ENCODE measurements at regions of chr13 and their contacts with region 1.

Region 1: DNA sequence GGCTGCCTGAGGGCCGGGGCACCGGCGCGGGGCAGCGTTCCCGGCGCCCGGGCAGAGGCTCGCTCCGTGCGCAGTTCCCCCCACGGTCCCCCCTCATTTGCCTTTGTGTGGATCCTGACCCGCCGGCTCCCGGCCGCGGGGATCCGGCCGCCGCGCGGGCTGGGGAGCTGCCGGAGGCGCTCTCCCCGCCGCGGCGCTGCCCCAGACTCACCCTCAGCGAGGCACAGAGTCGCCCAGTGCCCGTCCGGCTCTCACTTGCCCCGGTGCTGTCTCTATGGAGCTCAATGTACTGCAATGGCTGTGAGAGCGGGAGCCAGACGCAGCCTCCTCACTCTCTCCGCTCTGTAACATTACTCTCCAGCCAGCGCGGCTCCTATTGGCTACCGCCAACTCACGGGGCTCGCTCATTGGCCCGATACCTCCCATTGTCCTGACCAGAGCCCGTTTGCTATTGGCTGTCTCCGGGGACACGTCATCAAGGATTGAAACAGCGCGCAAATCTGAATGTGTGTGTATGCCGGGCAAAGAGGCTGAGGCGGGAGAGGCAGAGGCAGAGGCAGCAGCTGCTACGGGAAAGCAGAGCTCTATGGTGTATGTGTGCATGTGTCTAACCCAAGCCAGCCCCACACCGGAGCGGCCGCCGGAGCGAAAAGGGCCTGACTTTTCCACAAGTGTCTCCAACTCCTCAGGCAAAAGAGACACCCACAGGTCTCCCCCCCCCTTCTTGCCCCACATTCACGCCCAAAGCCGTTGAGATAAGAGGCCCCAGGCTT is at the start of gene HMGB1:
- DNase-seq: peak; percentile 94 to 97
- H3K4me3 ChIP-seq: peak within 1 kb of the TSS; percentile 72
- H3K27ac ChIP-seq: peak within 1 kb of the TSS; percentile 86
- H3K4me1 ChIP-seq: peaks cover 31% of the 10 kb centered on the region
- H3K27me3 ChIP-seq: no peaks in the 10 kb centered on the region
- CTCF ChIP-seq: no peak
- total RNA-seq, gene HMGB1: 172 and 313 TPM in 2 replicates

Region 2: GRCh38 chr13:30132623-30133553 is 332.9 kb before region 1 on chr13:
- CTCF ChIA-PET with region 1: no interaction called
- POLR2A ChIA-PET with region 1: no interaction called
- intact Hi-C with region 1: loop called (anchors 1 kb)
- DNase-seq: peak; percentile 75 to 90
- H3K4me3 ChIP-seq: no peak overlapping the region
- H3K27ac ChIP-seq: no peak overlapping the region
- H3K4me1 ChIP-seq: peaks cover 7% of the 10 kb centered on the region
- H3K27me3 ChIP-seq: no peaks in the 10 kb centered on the region
- CTCF ChIP-seq: peak; percentile 90

Region 3: GRCh38 chr13:30341815-30342570 is 123.8 kb before region 1 on chr13:
- CTCF ChIA-PET with region 1: no interaction called
- POLR2A ChIA-PET with region 1: no interaction called
- intact Hi-C with region 1: no loop called
- DNase-seq: peak; percentile 70 to 86
- H3K4me3 ChIP-seq: peak overlapping the region; percentile 1; the same call in 1 of the 2 replicates
- H3K27ac ChIP-seq: no peak overlapping the region
- H3K4me1 ChIP-seq: peaks cover 60% of the 10 kb centered on the region
- H3K27me3 ChIP-seq: no peaks in the 10 kb centered on the region
- CTCF ChIP-seq: no peak

Region 4: GRCh38 chr13:30395192-30396084 is 70.3 kb before region 1 on chr13:
- CTCF ChIA-PET with region 1: no interaction called
- POLR2A ChIA-PET with region 1: no interaction called
- intact Hi-C with region 1: no loop called
- DNase-seq: peak; percentile 71 to 89
- H3K4me3 ChIP-seq: peak overlapping the region; percentile 61
- H3K27ac ChIP-seq: peak overlapping the region; percentile 55
- H3K4me1 ChIP-seq: 0 out of 2 replicates have a peak, but pooled peaks cover 11% of the 10 kb centered on the region
- H3K27me3 ChIP-seq: no peaks in the 10 kb centered on the region
- CTCF ChIP-seq: no peak

Region 5: DNA sequence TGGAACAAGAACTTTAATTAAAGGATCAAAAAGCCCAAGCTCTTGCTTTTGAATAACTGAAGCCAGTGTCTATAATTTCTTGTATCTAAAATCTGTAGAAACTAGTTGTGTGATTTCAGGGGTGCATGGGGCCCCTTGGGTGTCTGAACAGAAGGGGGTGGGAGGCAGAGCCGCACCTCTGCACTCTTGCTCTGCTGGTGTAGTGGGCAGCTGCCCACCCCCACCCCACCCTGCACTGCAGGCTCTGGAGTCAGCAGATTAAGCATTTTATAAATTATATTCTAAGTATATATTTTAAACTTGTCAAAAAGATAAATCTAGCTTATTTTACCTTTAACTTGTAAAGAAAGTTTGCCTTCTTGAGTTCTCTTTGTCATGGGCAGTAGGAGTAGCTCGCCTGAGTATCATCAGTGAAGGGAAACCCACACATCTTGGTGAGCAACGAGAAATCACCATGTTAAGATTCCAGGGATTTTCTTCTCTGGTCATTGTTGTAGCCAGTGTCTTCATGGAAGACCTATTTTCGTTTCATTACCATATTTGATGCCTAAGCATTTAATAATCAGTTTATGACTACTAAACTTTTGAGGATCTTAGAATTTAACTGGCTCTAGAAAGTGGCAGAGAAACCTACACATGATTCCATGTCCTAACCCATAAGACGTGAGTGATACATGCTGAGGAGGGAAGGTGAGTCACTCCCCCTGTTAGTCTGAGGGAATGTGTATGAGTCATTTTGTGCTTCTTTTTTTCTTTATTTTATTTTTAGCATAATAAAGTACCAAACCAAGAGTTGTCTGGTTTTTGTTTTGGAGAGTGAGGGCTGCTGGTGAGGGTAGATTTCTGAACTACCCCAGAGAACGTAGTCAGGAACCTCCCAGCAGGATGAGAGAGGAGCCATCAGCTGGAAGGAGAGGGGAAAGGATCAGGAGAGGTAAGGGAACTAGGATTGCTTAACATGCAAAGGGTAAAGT is 35.8 kb before region 1 on chr13:
- CTCF ChIA-PET with region 1: no interaction called
- POLR2A ChIA-PET with region 1: interaction called, 16 read pairs
- intact Hi-C with region 1: no loop called
- DNase-seq: peak in 1 of 2 experiments; percentile 85
- H3K4me3 ChIP-seq: no peak overlapping the region; the same call in 1 of the 2 replicates
- H3K27ac ChIP-seq: peak overlapping the region; percentile 69
- H3K4me1 ChIP-seq: peaks cover 39% of the 10 kb centered on the region
- H3K27me3 ChIP-seq: no peaks in the 10 kb centered on the region
- CTCF ChIP-seq: no peak

Region 6: DNA sequence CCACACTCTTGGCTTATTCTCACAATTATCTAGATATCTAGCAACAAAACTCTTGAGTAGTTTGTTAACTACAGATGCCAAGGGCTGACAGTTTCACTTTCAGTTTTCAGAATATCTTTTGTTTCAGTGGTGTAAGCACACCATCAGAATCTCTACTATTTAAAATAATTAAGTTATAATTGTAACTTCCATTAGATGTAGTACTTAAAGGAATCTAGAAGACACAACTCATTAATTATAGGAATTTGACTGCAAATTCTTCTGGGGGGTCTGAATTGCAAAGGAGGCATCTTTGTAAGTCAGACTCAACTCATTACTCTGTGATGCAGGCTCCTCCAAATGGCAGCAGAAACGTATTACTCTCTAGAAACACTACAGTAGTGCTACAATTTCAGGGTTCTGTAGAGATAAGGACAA is 107.1 kb after region 1 on chr13:
- CTCF ChIA-PET with region 1: no interaction called
- POLR2A ChIA-PET with region 1: no interaction called
- intact Hi-C with region 1: loop called (anchors 2 kb)
- DNase-seq: no peak
- H3K4me3 ChIP-seq: no peak overlapping the region; the same call in 1 of the 2 replicates
- H3K27ac ChIP-seq: no peak overlapping the region
- H3K4me1 ChIP-seq: peaks cover 34% of the 10 kb centered on the region
- H3K27me3 ChIP-seq: no peaks in the 10 kb centered on the region
- CTCF ChIP-seq: no peak

Region 7: DNA sequence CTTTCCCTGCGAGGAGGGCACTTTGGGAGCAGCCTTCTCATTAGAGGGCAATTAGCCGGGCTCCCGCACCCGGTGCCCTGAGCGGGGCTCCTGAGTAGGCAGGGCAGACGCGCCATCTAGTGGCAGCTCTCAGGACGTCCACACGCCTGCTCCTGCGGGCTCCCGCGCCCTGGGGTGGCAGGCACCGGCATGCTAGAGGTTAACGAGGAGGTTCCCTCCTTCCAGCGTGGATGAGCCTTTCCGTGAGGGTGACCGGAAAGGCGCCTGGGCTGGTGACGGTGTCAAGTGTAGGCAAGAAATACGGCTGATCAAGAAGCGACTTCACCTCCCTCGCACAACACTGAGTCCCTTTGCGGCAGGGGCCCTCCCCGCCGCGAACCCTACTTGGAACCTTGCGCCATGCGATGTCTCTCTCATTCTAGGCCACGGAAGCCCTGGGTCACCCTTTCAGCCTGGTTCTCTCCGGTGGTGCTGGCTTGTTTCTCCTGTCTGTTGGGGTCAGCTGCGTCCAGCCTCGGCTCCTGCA is 337.2 kb after region 1 on chr13:
- CTCF ChIA-PET with region 1: no interaction called
- POLR2A ChIA-PET with region 1: no interaction called
- intact Hi-C with region 1: loop called (anchors 10 kb)
- DNase-seq: peak in 1 of 2 experiments; percentile 57
- H3K4me3 ChIP-seq: no peak overlapping the region
- H3K27ac ChIP-seq: no peak overlapping the region
- H3K4me1 ChIP-seq: no peaks in the 10 kb centered on the region
- H3K27me3 ChIP-seq: no peaks in the 10 kb centered on the region
- CTCF ChIP-seq: peak; percentile 95

Measured in PC-9 (cell line).